Dorsolateral prefrontal cortex (tissue), 120 donors: ENCODE measurements at regions of chr17 and their contacts with region 1.

Region 1: GRCh38 chr17:79796763-79797491 is at the start of gene CBX8:
- DNase-seq: peak; percentile 98 to 100 (median 99)
- H3K4me3 ChIP-seq: peak within 1 kb of the TSS; percentile 52 to 86 (median 76)
- H3K27ac ChIP-seq: peak within 1 kb of the TSS in 58 of 59 donors; percentile 29 to 97 (median 86)
- H3K27me3 ChIP-seq: peaks cover 30 to 72% (median 54%) of the 10 kb centered on the region in 45 donors
- CTCF ChIP-seq: peak in 44 of 56 donors; percentile 6 to 57 (median 36)
- total RNA-seq, gene CBX8: 1.5 to 10.3 (median 5.0) TPM

Region 2: GRCh38 chr17:79777894-79778503 is 18.9 kb before region 1 on chr17 and contains the start of gene CBX2:
- intact Hi-C with region 1: loop called (anchors 2 kb)
- DNase-seq: peak; percentile 44 to 83 (median 61)
- H3K4me3 ChIP-seq: peak within 1 kb of the TSS; percentile 31 to 83 (median 68)
- H3K27ac ChIP-seq: peak within 1 kb of the TSS in 31 of 59 donors; percentile 0 to 80 (median 42)
- H3K27me3 ChIP-seq: peaks cover 0 to 60% (median 35%) of the 10 kb centered on the region in 45 donors
- CTCF ChIP-seq: peak in 1 of 56 donors; percentile 13
- total RNA-seq, gene CBX2: 0.44 to 4.2 (median 1.8) TPM in 119 of 120 experiments, not detected in the other

Region 3: DNA sequence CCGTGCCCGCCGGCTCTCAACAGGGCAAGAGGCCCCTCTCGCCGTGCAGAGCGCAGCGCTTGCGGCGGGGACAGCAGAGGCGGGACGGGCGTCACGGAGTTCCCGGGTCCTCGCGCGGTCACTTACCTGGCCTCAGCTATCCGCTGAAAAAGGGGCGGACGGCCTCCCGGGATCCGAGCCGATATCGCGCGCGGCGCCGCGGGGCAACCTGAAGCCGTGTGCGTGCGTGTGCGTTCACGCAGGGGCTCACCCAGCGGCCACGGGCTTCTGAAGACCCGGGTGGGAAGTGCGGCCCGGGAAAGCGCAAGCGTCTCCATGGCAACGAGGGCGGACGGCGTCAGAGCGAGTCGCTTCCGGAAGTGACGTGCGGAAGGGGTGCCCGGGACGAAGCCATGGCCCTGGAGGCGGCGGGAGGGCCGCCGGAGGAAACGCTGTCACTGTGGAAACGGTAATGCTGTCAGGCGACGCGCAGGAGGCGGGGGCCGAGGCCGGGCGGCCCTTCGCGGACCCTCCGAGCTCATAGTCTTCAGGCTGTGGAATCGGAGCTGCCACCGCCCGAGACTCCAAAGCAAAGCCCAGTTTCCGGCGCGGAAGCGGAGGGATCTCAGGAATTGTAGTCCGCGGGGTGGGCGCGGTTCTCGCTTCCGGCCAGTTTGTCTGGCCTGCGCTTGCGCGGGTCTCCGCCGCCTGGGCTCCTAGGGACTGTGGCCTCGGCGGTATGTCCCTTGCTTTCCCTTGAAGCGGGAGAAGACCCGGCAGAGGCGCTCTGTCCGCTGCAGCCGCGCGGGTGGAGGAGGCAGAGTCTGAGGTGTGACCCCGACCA is 618.1 kb after region 1 on chr17 and contains the start of gene ENDOV:
- intact Hi-C with region 1: loop called in 1 of 2 experiments (anchors 10 kb)
- DNase-seq: peak; percentile 89 to 97 (median 94)
- H3K4me3 ChIP-seq: peak within 1 kb of the TSS; percentile 70 to 100 (median 92)
- H3K27ac ChIP-seq: peak within 1 kb of the TSS; percentile 84 to 100 (median 96)
- H3K27me3 ChIP-seq: no peaks in the 10 kb centered on the region
- CTCF ChIP-seq: peak in 23 of 56 donors; percentile 4 to 51 (median 28)
- total RNA-seq, gene ENDOV: 21.4 to 61.2 (median 36.5) TPM